ENCODE measurements at regions of chr1 and their contacts with region 1.

Region 1: GRCh38 chr1:161045750-161046571 is at the start of gene USF1:
- DNase-seq: peak; percentile 95
- ATAC-seq: peak; percentile 84
- H3K4me3 ChIP-seq: peak within 1 kb of the TSS; percentile 53
- H3K27ac ChIP-seq: peak within 1 kb of the TSS; percentile 93
- H3K4me1 ChIP-seq: no peaks in the 10 kb centered on the region; the same call in 1 of the 2 replicates
- H3K27me3 ChIP-seq: no peaks in the 10 kb centered on the region
- CTCF ChIP-seq: no peak
- POLR2A ChIP-seq: peak; percentile 92
- RAD21 ChIP-seq: no peak
- total RNA-seq, gene USF1: 62.2 and 78.9 TPM in 2 replicates

Region 2: DNA sequence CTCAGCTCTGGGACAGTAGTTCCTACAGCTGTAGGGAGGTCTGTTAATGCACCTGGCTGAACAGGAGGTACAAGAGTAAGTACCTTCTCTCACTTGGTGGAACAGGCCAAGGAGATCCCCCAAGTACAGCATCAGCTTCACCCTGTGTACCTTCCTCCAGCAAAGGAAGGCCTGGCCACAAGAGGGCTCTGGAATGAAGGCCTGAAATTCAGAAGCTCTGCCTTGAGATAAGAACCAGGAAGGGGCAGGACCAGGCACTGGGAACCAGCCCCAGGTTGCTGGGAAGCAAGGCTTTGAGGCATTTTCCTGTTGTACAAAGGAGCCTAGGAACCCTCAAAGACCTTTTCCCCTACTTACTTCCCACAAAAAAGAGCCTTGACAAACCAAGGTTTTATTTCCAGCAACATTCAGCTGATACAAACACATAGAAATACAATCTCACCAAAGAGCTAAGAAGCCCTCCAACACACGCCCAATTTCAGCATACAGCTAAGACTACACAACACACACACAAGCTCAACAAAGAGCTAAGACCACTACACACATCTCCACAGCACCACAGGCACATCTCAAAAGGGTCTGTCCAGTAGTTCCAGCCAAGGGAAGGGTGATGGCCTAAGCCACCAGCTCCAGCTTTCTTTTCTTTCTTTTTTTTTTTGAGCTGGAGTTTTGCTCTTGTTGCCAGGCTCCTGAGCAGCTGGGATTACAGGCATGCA is 48.5 kb before region 1 on chr1:
- CTCF ChIA-PET with region 1: interaction called, 10 read pairs
- POLR2A ChIA-PET with region 1: no interaction called
- dilution Hi-C with region 1: no loop called
- in situ Hi-C with region 1: loop called (anchors 5 kb)
- intact Hi-C with region 1: loop called (anchors 1 kb)
- DNase-seq: peak; percentile 64
- ATAC-seq: peak; percentile 86
- H3K4me3 ChIP-seq: no peak overlapping the region
- H3K27ac ChIP-seq: no peak overlapping the region
- H3K4me1 ChIP-seq: no peaks in the 10 kb centered on the region
- H3K27me3 ChIP-seq: no peaks in the 10 kb centered on the region
- CTCF ChIP-seq: peak; percentile 65
- POLR2A ChIP-seq: no peak
- RAD21 ChIP-seq: peak; percentile 62

Region 3: GRCh38 chr1:161082991-161083742 is 37.2 kb after region 1 on chr1:
- CTCF ChIA-PET with region 1: no interaction called
- POLR2A ChIA-PET with region 1: no interaction called
- dilution Hi-C with region 1: no loop called
- in situ Hi-C with region 1: no loop called
- intact Hi-C with region 1: loop called (anchors 5 kb)
- DNase-seq: peak; percentile 92
- ATAC-seq: peak; percentile 89
- H3K4me3 ChIP-seq: no peak overlapping the region
- H3K27ac ChIP-seq: peak overlapping the region; percentile 24; the same call in 1 of the 2 replicates
- H3K4me1 ChIP-seq: peaks cover 28% of the 10 kb centered on the region
- H3K27me3 ChIP-seq: no peaks in the 10 kb centered on the region
- CTCF ChIP-seq: no peak
- POLR2A ChIP-seq: no peak
- RAD21 ChIP-seq: no peak

Region 4: GRCh38 chr1:161098210-161099068 is 52.5 kb after region 1 on chr1 and contains the start of gene KLHDC9:
- CTCF ChIA-PET with region 1: interaction called, 13 read pairs
- POLR2A ChIA-PET with region 1: no interaction called
- dilution Hi-C with region 1: no loop called
- in situ Hi-C with region 1: no loop called
- intact Hi-C with region 1: loop called (anchors 1 kb)
- DNase-seq: peak; percentile 54
- ATAC-seq: peak; percentile 73
- H3K4me3 ChIP-seq: peak within 1 kb of the TSS; percentile 43
- H3K27ac ChIP-seq: no peak within 1 kb of the TSS
- H3K4me1 ChIP-seq: peaks cover 5% of the 10 kb centered on the region; the same call in 1 of the 2 replicates
- H3K27me3 ChIP-seq: no peaks in the 10 kb centered on the region
- CTCF ChIP-seq: no peak
- POLR2A ChIP-seq: no peak
- RAD21 ChIP-seq: no peak
- total RNA-seq, gene KLHDC9: 0.18 TPM in 1 of 2 replicates, not detected in the other

Region 5: GRCh38 chr1:161139765-161140164 is 93.8 kb after region 1 on chr1:
- CTCF ChIA-PET with region 1: no interaction called
- POLR2A ChIA-PET with region 1: no interaction called
- dilution Hi-C with region 1: no loop called
- in situ Hi-C with region 1: no loop called
- intact Hi-C with region 1: loop called (anchors 1 kb)
- DNase-seq: peak; percentile 57
- ATAC-seq: peak; percentile 60
- H3K4me3 ChIP-seq: no peak overlapping the region
- H3K27ac ChIP-seq: no peak overlapping the region
- H3K4me1 ChIP-seq: no peaks in the 10 kb centered on the region
- H3K27me3 ChIP-seq: no peaks in the 10 kb centered on the region
- CTCF ChIP-seq: peak; percentile 64
- POLR2A ChIP-seq: no peak
- RAD21 ChIP-seq: peak; percentile 66

Region 6: GRCh38 chr1:161389691-161390558 is 344.0 kb after region 1 on chr1:
- CTCF ChIA-PET with region 1: no interaction called
- POLR2A ChIA-PET with region 1: no interaction called
- dilution Hi-C with region 1: no loop called
- in situ Hi-C with region 1: no loop called
- intact Hi-C with region 1: loop called (anchors 5 kb)
- DNase-seq: peak; percentile 98
- ATAC-seq: peak; percentile 94
- H3K4me3 ChIP-seq: peak overlapping the region; percentile 90
- H3K27ac ChIP-seq: peak overlapping the region; percentile 89
- H3K4me1 ChIP-seq: no peaks in the 10 kb centered on the region
- H3K27me3 ChIP-seq: no peaks in the 10 kb centered on the region
- CTCF ChIP-seq: no peak
- POLR2A ChIP-seq: peak; percentile 84
- RAD21 ChIP-seq: no peak

Measured in IMR-90 (cell line).